K562 (cell line): ENCODE measurements at regions of chr17 and their contacts with region 1.

Region 1: GRCh38 chr17:28734813-28735722 is 6.5 kb downstream of the NEK8 start:
- DNase-seq: peak; percentile 85 to 95 (median 92)
- ATAC-seq: peak; percentile 99
- H3K4me3 ChIP-seq: no peak overlapping the region
- H3K27ac ChIP-seq: peak overlapping the region; percentile 64
- H3K4me1 ChIP-seq: peaks cover 27 to 51% of the 10 kb centered on the region in 2 experiments
- H3K27me3 ChIP-seq: no peaks in the 10 kb centered on the region
- CTCF ChIP-seq: peak; percentile 48 to 81 (median 54); a peak in 5 of 6 replicates
- EP300 ChIP-seq: peak; percentile 59; the same call in 1 of the 2 replicates
- POLR2A ChIP-seq: peak; percentile 35
- RAD21 ChIP-seq: peak; percentile 33 to 46

Region 2: GRCh38 chr17:28750178-28751047 is 15.3 kb after region 1 on chr17:
- CTCF ChIA-PET with region 1: interaction called, 7 read pairs
- POLR2A ChIA-PET with region 1: interaction called, 21 read pairs
- in situ Hi-C with region 1: no loop called
- intact Hi-C with region 1: no loop called
- DNase-seq: peak; percentile 80 to 98 (median 87)
- ATAC-seq: peak; percentile 87
- H3K4me3 ChIP-seq: no peak overlapping the region
- H3K27ac ChIP-seq: peak overlapping the region; percentile 37; the same call in 2 of the 3 replicates
- H3K4me1 ChIP-seq: peaks cover 20 to 36% of the 10 kb centered on the region in 2 experiments
- H3K27me3 ChIP-seq: no peaks in the 10 kb centered on the region
- CTCF ChIP-seq: peak; percentile 100
- EP300 ChIP-seq: no peak
- POLR2A ChIP-seq: peak; percentile 48; the same call in 1 of the 2 replicates
- RAD21 ChIP-seq: peak; percentile 99